ENCODE measurements at regions of chr17 and their contacts with region 1.

Region 1: DNA sequence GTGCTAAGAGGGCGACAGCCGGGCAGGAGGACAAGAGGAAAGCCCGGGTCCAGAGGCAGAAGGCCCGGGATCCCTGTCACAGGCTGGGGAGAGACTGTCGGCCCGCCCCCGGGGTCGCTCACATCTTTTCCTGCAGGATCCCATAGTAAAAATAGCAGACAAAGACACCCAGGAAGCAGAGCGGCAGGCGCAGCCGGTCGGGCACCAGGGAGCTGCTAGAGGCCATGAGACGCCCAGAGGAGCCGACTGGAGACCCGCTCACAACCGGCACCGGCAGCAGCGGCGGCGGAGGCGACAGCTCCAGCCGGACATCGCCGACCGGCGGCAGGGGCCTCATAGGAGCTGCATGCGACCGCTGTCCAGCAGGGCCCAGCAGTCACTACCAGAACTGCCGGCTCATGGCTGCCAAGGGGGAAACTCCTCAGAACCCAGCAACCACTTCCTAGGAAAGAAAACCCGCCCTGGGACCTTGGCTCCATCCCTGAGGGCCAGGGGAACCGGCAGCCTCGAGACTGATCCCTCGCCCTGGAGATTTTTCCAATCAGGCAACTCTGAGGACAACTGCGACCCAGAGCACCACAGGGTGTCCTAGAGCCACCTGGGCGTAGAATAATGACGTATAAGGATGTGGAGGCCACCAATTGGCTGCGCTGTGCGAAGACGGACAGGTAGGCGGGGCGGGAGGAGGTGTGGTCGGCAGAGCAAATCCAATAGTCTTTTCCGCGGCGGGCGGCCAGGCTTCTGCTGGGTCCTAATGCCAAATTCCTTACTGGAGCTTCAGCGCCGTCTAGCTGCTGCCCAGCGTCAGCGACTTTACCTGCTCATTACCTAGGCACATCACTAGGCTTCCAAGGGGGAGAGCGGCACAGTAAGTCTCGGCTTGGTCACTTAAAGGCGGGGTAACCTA is at the start of gene SLC35B1:
- DNase-seq: peak; percentile 97 to 99 (median 98)
- H3K4me3 ChIP-seq: peak within 1 kb of the TSS; percentile 86
- H3K4me3 Mint-ChIP-seq: peak within 1 kb of the TSS; percentile 83 to 95 (median 92)
- H3K27ac ChIP-seq: peak within 1 kb of the TSS; percentile 96
- H3K27ac Mint-ChIP-seq: peak within 1 kb of the TSS; percentile 88 to 99 (median 98)
- H3K4me1 ChIP-seq: peaks cover 26% of the 10 kb centered on the region
- H3K4me1 Mint-ChIP-seq: peaks cover 42 to 58% (median 54%) of the 10 kb centered on the region in 3 donors
- H3K27me3 ChIP-seq: no peaks in the 10 kb centered on the region
- H3K27me3 Mint-ChIP-seq: peaks cover 0 to 2% of the 10 kb centered on the region in 2 donors
- total RNA-seq, gene SLC35B1: 82.8 to 88.9 TPM

Region 2: GRCh38 chr17:49556223-49556971 is 151.5 kb before region 1 on chr17:
- CTCF ChIA-PET with region 1: interaction called, 10 read pairs
- POLR2A ChIA-PET with region 1: no interaction called
- DNase-seq: peak; percentile 72 to 84 (median 75)
- H3K4me3 ChIP-seq: no peak overlapping the region
- H3K4me3 Mint-ChIP-seq: no peak overlapping the region
- H3K27ac ChIP-seq: no peak overlapping the region
- H3K27ac Mint-ChIP-seq: no peak overlapping the region
- H3K4me1 ChIP-seq: peaks cover 14% of the 10 kb centered on the region
- H3K4me1 Mint-ChIP-seq: peaks cover 5 to 10% (median 10%) of the 10 kb centered on the region in 3 donors
- H3K27me3 ChIP-seq: no peaks in the 10 kb centered on the region
- H3K27me3 Mint-ChIP-seq: peaks cover 1 to 9% of the 10 kb centered on the region in 2 donors

Region 3: GRCh38 chr17:49739641-49740271 is 31.9 kb after region 1 on chr17:
- CTCF ChIA-PET with region 1: interaction called, 12 read pairs
- POLR2A ChIA-PET with region 1: interaction called, 17 read pairs
- DNase-seq: peak; percentile 94 to 99 (median 97)
- H3K4me3 ChIP-seq: peak overlapping the region; percentile 81
- H3K4me3 Mint-ChIP-seq: peak overlapping the region; percentile 90 to 98 (median 95)
- H3K27ac ChIP-seq: peak overlapping the region; percentile 88
- H3K27ac Mint-ChIP-seq: peak overlapping the region; percentile 97 to 100 (median 100)
- H3K4me1 ChIP-seq: peaks cover 95% of the 10 kb centered on the region
- H3K4me1 Mint-ChIP-seq: peaks cover 86 to 97% (median 93%) of the 10 kb centered on the region in 3 donors
- H3K27me3 ChIP-seq: no peaks in the 10 kb centered on the region
- H3K27me3 Mint-ChIP-seq: no peaks in the 10 kb centered on the region

Region 4: DNA sequence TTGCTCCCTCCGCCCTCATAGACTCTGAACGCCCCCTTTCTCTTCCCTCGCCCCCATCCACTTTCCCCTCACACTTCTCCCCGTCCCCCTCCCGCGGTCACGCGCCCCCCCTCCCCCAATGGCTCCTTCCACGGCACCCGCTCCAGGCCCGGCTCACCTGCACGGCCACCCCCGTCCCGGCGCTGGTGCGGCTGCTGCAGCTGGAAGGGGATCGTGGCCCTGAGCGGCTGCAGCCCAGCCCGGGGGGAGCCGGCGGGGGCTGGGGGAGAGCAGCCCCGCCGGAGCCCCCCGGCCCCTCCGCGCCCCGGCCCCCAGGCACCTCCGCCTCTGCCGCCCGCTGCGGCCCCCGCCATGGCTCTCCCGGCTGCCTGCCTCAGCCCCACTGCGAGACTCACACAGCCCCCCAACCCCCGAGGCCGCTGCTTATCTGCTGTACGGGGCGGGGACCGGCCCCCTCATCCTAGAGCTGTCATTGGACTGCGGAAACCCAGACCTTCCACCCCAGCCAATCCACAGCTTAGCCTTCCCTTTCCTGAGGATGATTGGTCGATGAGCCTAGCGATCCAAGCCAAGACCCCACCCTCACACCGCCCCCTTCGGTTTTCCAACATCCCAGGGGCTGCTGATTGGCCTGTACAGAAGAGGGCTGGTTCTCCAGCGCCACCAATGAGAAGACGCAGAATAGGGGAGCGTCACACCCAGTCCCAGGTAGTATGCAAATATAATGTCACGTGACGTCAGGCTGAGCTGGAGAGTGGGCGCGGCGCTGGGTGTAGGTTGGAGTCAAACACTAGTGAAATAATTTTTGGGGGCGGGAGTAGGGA is 56.1 kb after region 1 on chr17 and contains the start of gene FAM117A:
- CTCF ChIA-PET with region 1: interaction called, 26 read pairs
- POLR2A ChIA-PET with region 1: interaction called, 36 read pairs
- DNase-seq: peak; percentile 90 to 99 (median 98)
- H3K4me3 ChIP-seq: peak within 1 kb of the TSS; percentile 82
- H3K4me3 Mint-ChIP-seq: peak within 1 kb of the TSS; percentile 82 to 100 (median 98)
- H3K27ac ChIP-seq: peak within 1 kb of the TSS; percentile 66
- H3K27ac Mint-ChIP-seq: peak within 1 kb of the TSS; percentile 43 to 99 (median 96)
- H3K4me1 ChIP-seq: peaks cover 39% of the 10 kb centered on the region
- H3K4me1 Mint-ChIP-seq: peaks cover 47 to 56% (median 51%) of the 10 kb centered on the region in 3 donors
- H3K27me3 ChIP-seq: no peaks in the 10 kb centered on the region
- H3K27me3 Mint-ChIP-seq: peaks cover 0 to 3% of the 10 kb centered on the region in 2 donors
- total RNA-seq, gene FAM117A: 21.8 to 24.8 TPM

Region 5: DNA sequence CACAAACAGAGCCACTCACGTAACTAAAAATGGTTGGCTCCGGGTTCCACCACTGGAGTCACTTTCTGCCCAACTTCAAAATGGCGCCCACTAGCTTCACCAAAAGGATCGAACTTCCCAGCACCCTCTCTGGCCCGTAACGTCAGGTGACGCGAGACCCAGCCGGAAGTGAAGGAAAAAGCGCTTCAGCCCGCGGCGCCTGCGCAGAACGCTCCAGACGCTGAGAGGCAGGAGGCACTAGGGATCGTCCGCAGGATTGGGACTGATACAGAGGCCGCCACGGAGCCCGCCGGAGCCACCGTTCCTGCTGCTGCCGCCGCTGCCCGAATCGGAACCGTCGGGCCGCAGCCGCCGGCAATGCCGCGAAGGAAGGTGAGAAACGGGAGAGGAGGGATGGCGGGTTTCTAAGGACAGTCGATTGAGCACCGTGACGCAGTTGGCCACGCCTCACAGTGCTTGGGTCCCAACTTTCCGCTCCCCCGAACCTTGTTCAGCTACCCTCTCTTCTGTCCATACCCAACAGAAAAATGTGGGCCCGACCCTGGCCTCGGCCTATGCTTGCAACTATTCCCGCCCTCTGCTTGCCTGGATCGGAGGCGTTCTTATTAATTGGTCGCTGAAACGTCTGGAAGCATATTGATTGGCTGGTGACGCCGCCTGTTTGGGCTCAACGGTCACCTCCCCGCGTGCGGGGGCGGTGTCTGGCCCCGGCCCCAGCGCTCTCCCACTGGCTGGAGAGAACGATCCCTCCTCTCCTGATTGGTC is 80.8 kb after region 1 on chr17 and contains the start of gene KAT7:
- CTCF ChIA-PET with region 1: interaction called, 16 read pairs
- POLR2A ChIA-PET with region 1: interaction called, 17 read pairs
- DNase-seq: peak; percentile 97 to 99 (median 99)
- H3K4me3 ChIP-seq: peak within 1 kb of the TSS; percentile 93
- H3K4me3 Mint-ChIP-seq: peak within 1 kb of the TSS; percentile 91 to 100 (median 96)
- H3K27ac ChIP-seq: peak within 1 kb of the TSS; percentile 98
- H3K27ac Mint-ChIP-seq: peak within 1 kb of the TSS; percentile 90 to 100 (median 98)
- H3K4me1 ChIP-seq: peaks cover 33% of the 10 kb centered on the region
- H3K4me1 Mint-ChIP-seq: peaks cover 50 to 60% (median 59%) of the 10 kb centered on the region in 3 donors
- H3K27me3 ChIP-seq: no peaks in the 10 kb centered on the region
- H3K27me3 Mint-ChIP-seq: no peaks in the 10 kb centered on the region
- total RNA-seq, gene KAT7: 66.1 to 75.8 TPM